A673 (cell line): ENCODE measurements at regions of chr12 and their contacts with region 1.

Region 1: DNA sequence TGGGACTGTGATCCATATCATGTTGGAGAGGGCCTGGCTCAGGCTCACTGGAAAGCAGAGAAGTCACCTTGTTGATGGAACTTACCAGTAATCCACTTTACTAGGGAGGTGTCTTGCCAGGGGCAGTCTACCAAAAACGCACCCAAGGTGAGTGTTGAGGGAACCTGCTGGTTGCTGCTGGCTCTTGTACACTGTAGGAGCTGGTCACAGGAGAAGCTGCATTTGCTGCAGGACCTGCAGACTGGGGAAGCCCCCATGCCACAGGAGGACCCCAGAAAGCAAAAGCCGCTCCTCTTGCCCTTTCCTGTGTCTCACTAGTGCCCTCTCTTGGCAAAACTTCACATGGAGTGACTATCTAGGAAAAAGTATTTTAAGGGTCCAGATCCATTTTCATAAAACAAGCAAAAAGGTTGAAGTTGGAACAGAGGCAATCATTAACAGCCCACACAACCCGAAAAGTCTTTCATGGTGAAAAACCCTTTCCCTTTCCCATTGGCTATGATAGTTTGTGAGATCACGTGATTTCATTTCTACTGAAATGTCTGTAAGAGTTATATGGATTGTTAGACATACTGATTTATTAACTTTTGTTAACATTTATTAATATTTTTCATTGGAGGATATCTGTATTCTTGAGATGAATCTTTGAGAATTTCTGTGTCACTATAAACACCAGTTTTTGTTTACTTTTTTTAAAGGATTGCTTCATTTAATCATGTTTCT is 59.2 kb downstream of the RASSF8 start:
- DNase-seq: peak; percentile 79
- H3K4me3 ChIP-seq: no peak overlapping the region
- H3K27ac ChIP-seq: no peak overlapping the region
- H3K4me1 ChIP-seq: peaks cover 7% of the 10 kb centered on the region
- H3K27me3 ChIP-seq: no peaks in the 10 kb centered on the region
- CTCF ChIP-seq: peak; percentile 78

Region 2: GRCh38 chr12:25436203-25437030 is 581.2 kb before region 1 on chr12:
- CTCF ChIA-PET with region 1: no interaction called
- POLR2A ChIA-PET with region 1: no interaction called
- intact Hi-C with region 1: loop called (anchors 5 kb)
- DNase-seq: peak; percentile 79
- H3K4me3 ChIP-seq: peak overlapping the region; percentile 27
- H3K27ac ChIP-seq: no peak overlapping the region
- H3K4me1 ChIP-seq: no peaks in the 10 kb centered on the region
- H3K27me3 ChIP-seq: no peaks in the 10 kb centered on the region
- CTCF ChIP-seq: peak; percentile 90

Region 3: DNA sequence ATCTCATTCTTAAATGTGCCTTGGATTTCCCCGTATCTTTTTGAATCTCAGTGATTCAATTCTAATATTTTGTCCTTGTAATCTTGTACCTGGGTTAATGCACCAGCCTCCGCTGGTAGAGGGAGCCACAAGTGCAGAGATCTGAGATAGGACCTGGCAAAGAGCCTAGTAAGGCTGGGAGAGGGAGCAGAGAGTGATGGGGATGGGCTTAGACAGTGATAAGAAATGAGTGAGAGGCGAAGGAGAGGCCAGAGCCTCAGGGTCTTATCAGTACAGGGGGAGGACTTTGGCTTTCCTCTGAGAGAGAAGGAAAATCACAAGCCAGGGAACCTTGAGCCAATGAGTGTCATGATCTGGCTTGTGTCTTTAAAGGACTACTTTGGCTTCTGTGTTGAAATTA is 434.1 kb before region 1 on chr12:
- CTCF ChIA-PET with region 1: no interaction called
- POLR2A ChIA-PET with region 1: no interaction called
- intact Hi-C with region 1: loop called (anchors 10 kb)
- DNase-seq: peak; percentile 25
- H3K4me3 ChIP-seq: no peak overlapping the region
- H3K27ac ChIP-seq: no peak overlapping the region
- H3K4me1 ChIP-seq: no peaks in the 10 kb centered on the region
- H3K27me3 ChIP-seq: no peaks in the 10 kb centered on the region
- CTCF ChIP-seq: peak; percentile 39

Region 4: GRCh38 chr12:26195641-26196420 is 178.2 kb after region 1 on chr12:
- CTCF ChIA-PET with region 1: no interaction called
- POLR2A ChIA-PET with region 1: no interaction called
- intact Hi-C with region 1: no loop called
- DNase-seq: peak; percentile 53
- H3K4me3 ChIP-seq: peak overlapping the region; percentile 46
- H3K27ac ChIP-seq: peak overlapping the region; percentile 61
- H3K4me1 ChIP-seq: peaks cover 23% of the 10 kb centered on the region
- H3K27me3 ChIP-seq: no peaks in the 10 kb centered on the region
- CTCF ChIP-seq: no peak